ENCODE measurements at regions of chr12 and their contacts with region 1.

Region 1: GRCh38 chr12:3034067-3034750 is 43.0 kb upstream of the TSPAN9 start:
- DNase-seq: peak; percentile 61
- ATAC-seq: peak; percentile 72

Region 2: GRCh38 chr12:2853626-2854025 is 180.6 kb before region 1 on chr12:
- intact Hi-C with region 1: loop called (anchors 5 kb)
- DNase-seq: peak; percentile 86
- ATAC-seq: peak; percentile 89

Region 3: GRCh38 chr12:2890388-2891239 is 143.6 kb before region 1 on chr12 and contains the start of gene TULP3:
- intact Hi-C with region 1: loop called (anchors 2 kb)
- DNase-seq: peak; percentile 99
- ATAC-seq: peak; percentile 99
- total RNA-seq, gene TULP3: 6.8 TPM

Region 4: GRCh38 chr12:2959505-2960389 is 74.5 kb before region 1 on chr12:
- intact Hi-C with region 1: loop called (anchors 5 kb)
- DNase-seq: peak; percentile 78
- ATAC-seq: peak; percentile 60

Region 5: DNA sequence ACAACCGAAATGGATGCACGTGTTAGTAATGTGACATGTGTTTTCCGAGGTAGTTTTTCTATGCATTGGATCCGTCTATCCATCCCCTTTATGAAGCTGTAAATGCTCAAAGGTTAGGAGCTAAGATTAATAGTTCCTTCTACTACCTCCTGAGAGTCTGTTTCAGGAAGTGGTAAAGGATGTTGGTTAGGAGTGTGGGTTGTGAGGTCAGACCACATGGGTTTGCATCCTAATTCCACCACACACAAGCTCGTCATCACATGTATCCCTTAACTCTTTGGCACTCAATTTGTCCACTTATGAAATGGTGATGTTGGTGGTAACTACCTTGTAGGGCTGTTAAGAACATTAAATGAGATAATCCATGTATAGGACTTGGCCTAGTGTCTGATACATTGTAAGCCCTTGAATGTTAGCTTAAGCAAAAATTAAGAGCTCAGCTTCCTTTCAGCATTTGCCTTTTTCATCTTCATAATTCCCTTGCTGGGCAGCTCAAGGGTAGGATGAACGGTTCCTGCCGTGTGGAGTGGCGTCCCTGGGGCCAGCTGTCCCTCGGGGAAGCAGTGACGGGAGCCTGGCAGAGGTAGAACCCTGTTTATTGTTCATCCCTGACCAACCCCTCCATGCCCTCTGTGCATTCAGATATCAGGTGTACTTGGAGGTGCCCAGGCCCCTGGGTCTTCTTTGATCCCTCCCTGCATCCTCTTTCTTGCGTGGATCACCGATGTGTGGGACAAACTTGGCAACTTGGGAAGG is 95.3 kb after region 1 on chr12:
- intact Hi-C with region 1: no loop called
- DNase-seq: no peak
- ATAC-seq: no peak

Region 6: DNA sequence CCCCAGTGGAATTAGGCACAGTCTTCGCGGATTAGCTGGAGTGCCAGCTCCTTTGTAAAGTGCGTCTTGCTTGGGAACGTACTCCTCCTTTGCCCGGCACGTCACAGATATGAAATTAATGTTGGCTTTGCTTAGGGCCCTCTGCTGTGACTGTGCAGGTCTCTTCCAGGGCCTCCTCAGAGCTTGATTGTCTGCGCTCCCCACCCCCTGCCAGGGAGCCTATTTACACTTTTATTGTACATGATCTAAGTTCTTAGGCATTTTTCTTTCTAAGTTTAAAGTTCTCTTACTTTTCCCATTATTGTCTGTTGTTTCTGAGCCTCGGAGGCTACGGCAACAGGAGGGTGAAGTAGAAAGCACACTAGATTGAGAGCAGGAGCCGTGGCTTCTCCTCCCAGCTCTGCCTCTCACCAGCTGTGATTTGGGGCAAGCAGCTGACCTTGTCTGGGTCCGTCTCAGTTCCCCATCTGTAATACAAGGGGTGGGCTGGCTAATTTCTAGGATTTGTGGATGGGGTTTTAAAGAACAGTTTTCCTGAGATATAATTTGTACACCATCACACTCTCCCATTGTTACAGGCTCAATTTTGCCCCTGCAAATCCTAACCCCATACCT is 124.7 kb after region 1 on chr12:
- intact Hi-C with region 1: no loop called
- DNase-seq: no peak
- ATAC-seq: no peak

Measured in Right ventricle myocardium inferior (tissue), 1 donor.